IMR-90 (cell line): ENCODE measurements at regions of chr7 and their contacts with region 1.

Region 1: DNA sequence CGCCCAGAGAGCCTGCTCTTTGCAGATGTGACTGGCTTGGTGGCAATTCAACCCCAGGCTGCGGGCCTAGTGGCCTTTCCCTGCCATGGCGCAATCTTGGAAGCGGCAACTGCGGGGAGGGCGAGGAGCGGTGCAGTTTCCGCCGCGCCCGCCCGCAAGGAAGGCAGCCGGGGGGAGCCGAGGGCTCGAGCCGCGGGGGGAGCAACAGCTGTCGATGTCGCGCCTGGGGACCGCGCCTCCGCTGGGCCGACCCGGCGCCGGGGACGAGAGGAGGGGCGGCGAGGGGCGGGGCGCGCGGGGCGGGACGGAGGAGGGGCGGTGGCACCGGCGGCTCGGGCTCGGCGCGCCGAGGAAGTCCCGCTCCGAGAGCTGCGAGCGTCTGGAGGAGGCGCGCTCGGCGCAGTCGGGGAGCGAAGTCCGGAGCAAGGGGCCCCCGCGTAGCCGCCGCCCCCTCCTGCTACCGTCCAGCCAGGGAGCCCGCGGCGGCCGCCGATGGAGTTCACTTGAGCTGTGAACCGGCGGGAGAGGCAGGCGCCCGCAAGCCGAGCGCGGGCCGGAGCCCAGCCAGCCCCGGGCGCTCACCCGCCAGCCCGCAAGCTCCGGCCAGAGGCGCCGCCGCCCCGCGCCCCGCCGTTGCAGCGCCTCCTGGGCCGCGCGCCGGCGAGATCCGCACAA is 438.1 kb upstream of the GALNT17 start:
- DNase-seq: peak; percentile 44
- ATAC-seq: peak; percentile 76
- H3K4me3 ChIP-seq: peak overlapping the region; percentile 90
- H3K27ac ChIP-seq: no peak overlapping the region; the same call in 1 of the 2 replicates
- H3K4me1 ChIP-seq: peaks cover 4% of the 10 kb centered on the region
- H3K27me3 ChIP-seq: no peaks in the 10 kb centered on the region; the same call in 1 of the 2 replicates
- CTCF ChIP-seq: no peak
- POLR2A ChIP-seq: no peak
- RAD21 ChIP-seq: no peak

Region 2: GRCh38 chr7:69598081-69598486 is 1095.7 kb before region 1 on chr7 and contains the start of gene AUTS2:
- CTCF ChIA-PET with region 1: no interaction called
- POLR2A ChIA-PET with region 1: no interaction called
- dilution Hi-C with region 1: no loop called
- in situ Hi-C with region 1: no loop called
- intact Hi-C with region 1: loop called (anchors 10 kb)
- DNase-seq: peak; percentile 43
- ATAC-seq: peak; percentile 86
- H3K4me3 ChIP-seq: peak within 1 kb of the TSS; percentile 69
- H3K27ac ChIP-seq: no peak within 1 kb of the TSS
- H3K4me1 ChIP-seq: 0 out of 2 replicates have a peak, but pooled peaks cover 2% of the 10 kb centered on the region
- H3K27me3 ChIP-seq: peaks cover 17% of the 10 kb centered on the region
- CTCF ChIP-seq: no peak
- POLR2A ChIP-seq: no peak
- RAD21 ChIP-seq: no peak
- total RNA-seq, gene AUTS2: 0.90 and 1.4 TPM in 2 replicates

Region 3: DNA sequence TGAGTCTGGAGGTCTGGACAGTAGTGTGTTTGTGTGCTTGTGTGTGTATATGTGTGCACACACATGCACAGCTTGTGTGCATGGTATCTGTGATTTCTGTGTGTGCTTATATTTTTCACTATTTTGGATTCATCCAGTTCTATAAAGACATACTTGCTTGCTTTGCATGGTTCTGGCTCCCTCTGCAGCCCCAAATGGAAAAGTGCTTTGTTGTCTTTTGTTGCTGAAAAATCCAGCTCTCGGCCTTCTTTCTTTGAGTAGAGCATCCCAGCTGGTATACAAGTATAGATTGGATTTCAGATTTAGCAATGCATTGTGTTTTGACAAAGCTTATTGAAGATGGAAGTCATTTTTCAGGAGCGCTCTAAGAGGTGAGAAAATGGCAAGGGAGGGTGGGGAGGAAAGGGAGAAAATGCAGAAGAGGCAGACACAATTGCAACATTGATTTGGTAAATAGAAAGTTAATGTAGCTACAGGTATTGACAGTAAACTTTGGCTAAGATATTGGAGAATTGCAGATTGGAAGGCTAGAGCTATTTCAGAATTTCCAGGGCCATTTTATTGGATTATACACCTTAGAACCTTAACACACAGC is 761.7 kb before region 1 on chr7:
- CTCF ChIA-PET with region 1: no interaction called
- POLR2A ChIA-PET with region 1: no interaction called
- dilution Hi-C with region 1: no loop called
- in situ Hi-C with region 1: no loop called
- intact Hi-C with region 1: loop called (anchors 5 kb)
- DNase-seq: peak; percentile 4
- ATAC-seq: peak; percentile 42; the same call in 1 of the 2 replicates
- H3K4me3 ChIP-seq: no peak overlapping the region
- H3K27ac ChIP-seq: no peak overlapping the region
- H3K4me1 ChIP-seq: no peaks in the 10 kb centered on the region
- H3K27me3 ChIP-seq: no peaks in the 10 kb centered on the region
- CTCF ChIP-seq: peak; percentile 41
- POLR2A ChIP-seq: no peak
- RAD21 ChIP-seq: peak; percentile 53

Region 4: GRCh38 chr7:70040970-70041766 is 652.7 kb before region 1 on chr7:
- CTCF ChIA-PET with region 1: interaction called, 5 read pairs
- POLR2A ChIA-PET with region 1: no interaction called
- dilution Hi-C with region 1: no loop called
- in situ Hi-C with region 1: no loop called
- intact Hi-C with region 1: loop called (anchors 2 kb)
- DNase-seq: no peak
- ATAC-seq: no peak
- H3K4me3 ChIP-seq: no peak overlapping the region
- H3K27ac ChIP-seq: no peak overlapping the region
- H3K4me1 ChIP-seq: no peaks in the 10 kb centered on the region
- H3K27me3 ChIP-seq: no peaks in the 10 kb centered on the region
- CTCF ChIP-seq: no peak
- POLR2A ChIP-seq: no peak
- RAD21 ChIP-seq: no peak

Region 5: DNA sequence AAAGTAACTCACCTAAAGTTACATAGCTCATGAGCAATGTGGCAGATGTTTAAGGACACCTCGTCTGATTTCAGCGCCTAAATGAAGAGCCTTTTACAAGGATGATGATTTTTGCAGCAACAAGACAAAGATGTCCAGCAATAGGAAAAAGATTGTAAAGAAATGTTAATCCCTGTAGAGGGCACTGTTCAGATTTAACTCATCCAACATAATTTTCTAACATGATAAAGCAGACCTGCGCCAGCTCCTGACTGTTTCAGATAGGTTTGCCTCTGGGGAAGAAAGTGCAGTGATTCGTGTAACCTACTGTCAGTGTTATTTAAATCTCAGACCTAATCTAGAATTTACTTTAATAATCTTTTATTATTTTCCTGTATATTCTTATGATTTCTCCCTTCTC is 500.3 kb before region 1 on chr7:
- CTCF ChIA-PET with region 1: interaction called, 4 read pairs
- POLR2A ChIA-PET with region 1: no interaction called
- dilution Hi-C with region 1: no loop called
- in situ Hi-C with region 1: no loop called
- intact Hi-C with region 1: loop called (anchors 1 kb)
- DNase-seq: peak; percentile 1
- ATAC-seq: no peak
- H3K4me3 ChIP-seq: no peak overlapping the region
- H3K27ac ChIP-seq: no peak overlapping the region
- H3K4me1 ChIP-seq: no peaks in the 10 kb centered on the region
- H3K27me3 ChIP-seq: no peaks in the 10 kb centered on the region
- CTCF ChIP-seq: 0 out of 2 replicates have a peak, but pooled peaks have one; percentile 10
- POLR2A ChIP-seq: no peak
- RAD21 ChIP-seq: no peak

Region 6: GRCh38 chr7:70380421-70381015 is 313.3 kb before region 1 on chr7:
- CTCF ChIA-PET with region 1: no interaction called
- POLR2A ChIA-PET with region 1: no interaction called
- dilution Hi-C with region 1: no loop called
- in situ Hi-C with region 1: no loop called
- intact Hi-C with region 1: no loop called
- DNase-seq: no peak
- ATAC-seq: no peak
- H3K4me3 ChIP-seq: no peak overlapping the region
- H3K27ac ChIP-seq: no peak overlapping the region
- H3K4me1 ChIP-seq: no peaks in the 10 kb centered on the region
- H3K27me3 ChIP-seq: no peaks in the 10 kb centered on the region
- CTCF ChIP-seq: no peak
- POLR2A ChIP-seq: no peak
- RAD21 ChIP-seq: no peak

Region 7: DNA sequence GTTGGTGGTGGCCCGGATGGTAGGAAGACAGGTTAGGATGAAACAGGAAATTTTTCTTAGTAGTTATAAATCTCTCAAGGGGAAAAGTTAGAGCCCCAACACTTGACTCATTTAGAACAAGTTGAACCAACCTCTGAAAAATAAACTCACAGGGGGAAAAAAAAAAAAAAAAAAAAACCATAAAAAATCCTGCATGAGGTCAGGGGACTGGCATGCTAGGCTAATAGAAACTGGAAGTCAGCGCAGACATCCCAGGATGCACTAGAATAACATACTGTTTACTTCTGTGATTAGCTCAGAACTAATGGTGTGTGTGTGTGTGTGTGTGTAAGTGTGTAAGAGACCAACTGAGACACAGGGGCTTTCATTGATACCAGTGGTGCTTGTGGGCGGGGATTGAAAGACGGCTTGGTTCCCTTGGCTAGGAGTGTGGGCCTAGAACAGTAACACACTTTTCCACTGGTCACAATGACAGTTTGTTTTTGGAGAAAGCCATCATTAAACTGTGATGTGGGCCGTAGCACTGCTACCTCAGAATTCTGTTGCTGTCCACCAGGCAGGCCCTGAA is 53.5 kb before region 1 on chr7:
- CTCF ChIA-PET with region 1: no interaction called
- POLR2A ChIA-PET with region 1: no interaction called
- dilution Hi-C with region 1: no loop called
- in situ Hi-C with region 1: no loop called
- intact Hi-C with region 1: loop called (anchors 2 kb)
- DNase-seq: peak; percentile 87
- ATAC-seq: peak; percentile 95
- H3K4me3 ChIP-seq: no peak overlapping the region
- H3K27ac ChIP-seq: peak overlapping the region; percentile 8; the same call in 1 of the 2 replicates
- H3K4me1 ChIP-seq: peaks cover 2% of the 10 kb centered on the region; the same call in 1 of the 2 replicates
- H3K27me3 ChIP-seq: no peaks in the 10 kb centered on the region
- CTCF ChIP-seq: no peak
- POLR2A ChIP-seq: no peak
- RAD21 ChIP-seq: no peak